WTC11 (cell line): ENCODE measurements at regions of chr9 and their contacts with region 1.

Region 1: DNA sequence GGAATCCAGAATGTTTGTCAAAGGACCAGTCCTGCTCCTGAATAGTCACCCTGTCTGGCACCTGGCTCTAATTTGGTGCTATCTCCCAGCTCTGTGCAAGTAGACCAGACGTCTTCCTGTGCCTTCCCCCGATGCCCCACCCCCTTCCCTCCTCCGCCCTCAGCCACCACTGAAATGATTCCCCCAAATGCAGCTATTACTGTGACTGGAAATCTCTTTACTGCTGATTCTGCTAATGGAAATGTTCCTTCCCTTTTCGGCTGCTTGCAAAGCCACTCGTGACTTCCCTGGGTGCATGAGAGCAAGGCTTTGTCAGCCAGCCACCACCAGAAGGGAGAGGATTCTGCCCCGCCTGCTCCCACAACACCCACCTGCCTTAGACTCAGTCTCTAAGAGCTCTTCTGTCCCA is 11.4 kb downstream of the ASTN2 start:
- DNase-seq: no peak
- ATAC-seq: peak; percentile 38
- H3K4me3 Mint-ChIP-seq: peak overlapping the region; percentile 47
- H3K27ac Mint-ChIP-seq: 0 out of 2 replicates have a peak overlapping the region, but pooled peaks have one; percentile 71
- H3K4me1 Mint-ChIP-seq: peaks cover 68% of the 10 kb centered on the region
- H3K27me3 Mint-ChIP-seq: no peaks in the 10 kb centered on the region
- CTCF ChIP-seq: no peak

Region 2: DNA sequence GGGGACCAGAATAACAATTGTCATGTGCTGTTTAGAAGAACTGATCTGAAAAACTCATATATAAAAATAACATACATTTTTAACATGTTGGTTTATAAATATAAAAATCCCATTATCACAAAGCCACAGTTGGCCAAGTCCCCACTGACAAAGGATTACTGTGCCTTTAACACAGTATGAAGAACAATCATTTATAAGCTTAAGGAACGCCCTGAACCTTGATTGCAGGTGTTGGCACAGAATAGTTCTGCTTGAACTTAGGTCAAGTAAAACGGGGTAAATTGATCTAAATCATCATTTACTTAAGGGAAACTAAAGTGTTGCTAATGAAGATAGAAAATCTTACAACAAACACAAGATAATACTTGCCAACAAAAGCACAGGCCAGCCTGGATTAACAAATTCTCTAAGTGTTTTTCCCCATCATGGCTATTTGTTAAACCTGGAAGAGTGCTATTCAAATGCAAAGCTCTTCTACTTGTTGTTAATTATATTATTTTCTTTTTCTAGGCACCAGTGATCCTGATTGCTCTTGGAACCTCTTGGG is 34.6 kb before region 1 on chr9:
- CTCF ChIA-PET with region 1: no interaction called
- POLR2A ChIA-PET with region 1: no interaction called
- DNase-seq: no peak
- ATAC-seq: peak; percentile 34; the same call in 1 of the 2 replicates
- H3K4me3 Mint-ChIP-seq: no peak overlapping the region
- H3K27ac Mint-ChIP-seq: no peak overlapping the region
- H3K4me1 Mint-ChIP-seq: peaks cover 49% of the 10 kb centered on the region
- H3K27me3 Mint-ChIP-seq: no peaks in the 10 kb centered on the region
- CTCF ChIP-seq: no peak

Region 3: DNA sequence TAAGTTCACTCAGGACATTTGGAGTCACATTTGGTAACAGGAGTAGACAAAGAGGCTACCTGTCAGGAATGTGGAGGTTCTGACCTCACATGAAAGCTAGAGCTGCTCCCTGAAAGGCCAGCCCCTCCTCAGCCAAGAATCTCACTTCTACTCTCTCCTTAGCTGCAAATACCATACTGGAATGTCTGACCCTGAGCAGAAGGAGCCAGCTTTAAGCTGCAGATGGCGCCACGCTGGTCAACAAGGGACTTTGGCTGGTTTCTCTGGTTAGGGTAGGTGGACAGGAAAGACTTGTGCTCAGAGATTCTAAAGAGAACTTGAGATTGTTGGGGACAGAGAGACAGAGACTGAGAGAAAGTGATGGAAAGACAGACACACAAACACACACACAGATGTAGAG is 10.4 kb before region 1 on chr9:
- CTCF ChIA-PET with region 1: interaction called, 20 read pairs
- POLR2A ChIA-PET with region 1: no interaction called
- DNase-seq: peak; percentile 55
- ATAC-seq: peak; percentile 95
- H3K4me3 Mint-ChIP-seq: no peak overlapping the region
- H3K27ac Mint-ChIP-seq: no peak overlapping the region
- H3K4me1 Mint-ChIP-seq: peaks cover 15% of the 10 kb centered on the region
- H3K27me3 Mint-ChIP-seq: no peaks in the 10 kb centered on the region
- CTCF ChIP-seq: no peak